ENCODE measurements at regions of chr6 and their contacts with region 1.

Region 1: GRCh38 chr6:503610-504362 is 112.2 kb downstream of the IRF4 start:
- DNase-seq: peak; percentile 68
- ATAC-seq: peak; percentile 73 to 85

Region 2: GRCh38 chr6:340991-341827 is 162.6 kb before region 1 on chr6:
- intact Hi-C with region 1: no loop called
- DNase-seq: no peak
- ATAC-seq: peak; percentile 31 to 47

Region 3: GRCh38 chr6:439641-440167 is 64.1 kb before region 1 on chr6:
- intact Hi-C with region 1: loop called in 1 of 2 experiments (anchors 2 kb)
- DNase-seq: peak; percentile 64
- ATAC-seq: peak; percentile 52 to 54

Region 4: GRCh38 chr6:467671-468082 is 36.1 kb before region 1 on chr6:
- intact Hi-C with region 1: no loop called
- DNase-seq: no peak
- ATAC-seq: no peak